ENCODE measurements at regions of chr1 and their contacts with region 1.

Region 1: GRCh38 chr1:15847100-15847892 is at the start of gene SPEN:
- DNase-seq: peak; percentile 95
- H3K4me3 ChIP-seq: peak within 1 kb of the TSS; percentile 72 to 80
- H3K27ac ChIP-seq: peak within 1 kb of the TSS; percentile 98
- H3K4me1 ChIP-seq: peaks cover 7 to 24% of the 10 kb centered on the region in 2 experiments; a peak in 3 of 4 replicates
- H3K27me3 ChIP-seq: no peaks in the 10 kb centered on the region
- CTCF ChIP-seq: no peak
- EP300 ChIP-seq: 0 out of 4 replicates have a peak, but pooled peaks of 1 of the 2 experiments have one; percentile 21
- RAD21 ChIP-seq: no peak; the same call in 1 of the 2 replicates
- polyA plus RNA-seq, gene SPEN: 3.2 and 6.1 TPM in 2 replicates

Region 2: GRCh38 chr1:15835741-15836510 is 11.4 kb before region 1 on chr1:
- CTCF ChIA-PET with region 1: interaction called, 10 read pairs
- POLR2A ChIA-PET with region 1: interaction called, 19 read pairs
- DNase-seq: peak; percentile 96
- H3K4me3 ChIP-seq: peak overlapping the region; percentile 61 to 98
- H3K27ac ChIP-seq: peak overlapping the region; percentile 98 to 100
- H3K4me1 ChIP-seq: peaks cover 3 to 12% of the 10 kb centered on the region in 2 experiments; a peak in 2 of 4 replicates
- H3K27me3 ChIP-seq: no peaks in the 10 kb centered on the region
- CTCF ChIP-seq: no peak
- EP300 ChIP-seq: peak in 1 of 2 experiments; percentile 46; a peak in 3 of 4 replicates
- RAD21 ChIP-seq: no peak; the same call in 1 of the 2 replicates

Region 3: GRCh38 chr1:15885701-15886610 is 38.7 kb after region 1 on chr1:
- CTCF ChIA-PET with region 1: no interaction called
- POLR2A ChIA-PET with region 1: interaction called, 22 read pairs
- DNase-seq: peak; percentile 91
- H3K4me3 ChIP-seq: peak overlapping the region; percentile 43 to 54
- H3K27ac ChIP-seq: peak overlapping the region; percentile 83 to 97
- H3K4me1 ChIP-seq: peaks cover 7 to 24% of the 10 kb centered on the region in 2 experiments; a peak in 3 of 4 replicates
- H3K27me3 ChIP-seq: no peaks in the 10 kb centered on the region
- CTCF ChIP-seq: peak; percentile 50
- EP300 ChIP-seq: peak; percentile 10 to 74; a peak in 1 of 4 replicates
- RAD21 ChIP-seq: 0 out of 2 replicates have a peak, but pooled peaks have one; percentile 15

Measured in SK-N-SH (cell line).